Activated naive CD8-positive, alpha-beta T cell treated with anti-CD3 and anti-CD28 coated beads, Interleukin-2, amount 10 ng/mL, durations not matched to agents 7 days and 5 days (primary cell): ENCODE measurements at regions of chr19 and their contacts with region 1.

Region 1: GRCh38 chr19:21568816-21569493 is 63.6 kb downstream of the ZNF429 start:
- DNase-seq: peak; percentile 63
- ATAC-seq: peak; percentile 97
- H3K4me3 Mint-ChIP-seq: peak overlapping the region; percentile 93
- H3K27ac Mint-ChIP-seq: peak overlapping the region; percentile 97
- H3K4me1 Mint-ChIP-seq: peaks cover 1% of the 10 kb centered on the region
- H3K27me3 Mint-ChIP-seq: no peaks in the 10 kb centered on the region

Region 2: GRCh38 chr19:21532904-21533303 is 36.1 kb before region 1 on chr19:
- POLR2A ChIA-PET with region 1: no interaction called
- DNase-seq: no peak
- ATAC-seq: no peak
- H3K4me3 Mint-ChIP-seq: no peak overlapping the region
- H3K27ac Mint-ChIP-seq: no peak overlapping the region
- H3K4me1 Mint-ChIP-seq: no peaks in the 10 kb centered on the region
- H3K27me3 Mint-ChIP-seq: no peaks in the 10 kb centered on the region

Region 3: GRCh38 chr19:21580101-21580500 is 11.1 kb after region 1 on chr19:
- POLR2A ChIA-PET with region 1: interaction called, 12 read pairs
- DNase-seq: no peak
- ATAC-seq: no peak
- H3K4me3 Mint-ChIP-seq: no peak overlapping the region
- H3K27ac Mint-ChIP-seq: peak overlapping the region; percentile 43
- H3K4me1 Mint-ChIP-seq: peaks cover 6% of the 10 kb centered on the region
- H3K27me3 Mint-ChIP-seq: no peaks in the 10 kb centered on the region

Region 4: DNA sequence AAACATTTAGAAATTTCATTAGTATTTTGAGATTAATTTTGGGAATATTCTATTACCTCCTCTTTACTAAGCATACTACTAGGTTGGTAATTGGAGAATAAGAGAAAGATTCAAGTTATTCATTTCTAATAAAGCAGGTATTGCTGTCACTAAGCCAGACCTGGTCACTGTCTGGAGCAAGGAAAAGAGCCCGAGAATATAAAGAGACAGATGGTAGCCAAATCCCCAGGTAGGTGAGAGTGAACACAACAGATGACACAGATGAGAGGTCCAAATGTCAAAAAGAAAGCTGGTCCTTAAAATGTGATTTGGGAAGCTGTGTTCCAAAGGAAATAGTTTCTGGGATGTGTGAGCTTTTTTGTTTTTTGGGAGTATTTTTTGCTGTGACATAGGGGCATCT is 69.8 kb after region 1 on chr19:
- POLR2A ChIA-PET with region 1: no interaction called
- DNase-seq: no peak
- ATAC-seq: no peak
- H3K4me3 Mint-ChIP-seq: no peak overlapping the region
- H3K27ac Mint-ChIP-seq: no peak overlapping the region
- H3K4me1 Mint-ChIP-seq: no peaks in the 10 kb centered on the region
- H3K27me3 Mint-ChIP-seq: no peaks in the 10 kb centered on the region

Region 5: GRCh38 chr19:21704320-21704719 is 135.4 kb after region 1 on chr19:
- POLR2A ChIA-PET with region 1: no interaction called
- DNase-seq: no peak
- ATAC-seq: no peak
- H3K4me3 Mint-ChIP-seq: no peak overlapping the region
- H3K27ac Mint-ChIP-seq: no peak overlapping the region
- H3K4me1 Mint-ChIP-seq: no peaks in the 10 kb centered on the region
- H3K27me3 Mint-ChIP-seq: no peaks in the 10 kb centered on the region